Caco-2 (cell line): ENCODE measurements at regions of chr17 and their contacts with region 1.

Region 1: DNA sequence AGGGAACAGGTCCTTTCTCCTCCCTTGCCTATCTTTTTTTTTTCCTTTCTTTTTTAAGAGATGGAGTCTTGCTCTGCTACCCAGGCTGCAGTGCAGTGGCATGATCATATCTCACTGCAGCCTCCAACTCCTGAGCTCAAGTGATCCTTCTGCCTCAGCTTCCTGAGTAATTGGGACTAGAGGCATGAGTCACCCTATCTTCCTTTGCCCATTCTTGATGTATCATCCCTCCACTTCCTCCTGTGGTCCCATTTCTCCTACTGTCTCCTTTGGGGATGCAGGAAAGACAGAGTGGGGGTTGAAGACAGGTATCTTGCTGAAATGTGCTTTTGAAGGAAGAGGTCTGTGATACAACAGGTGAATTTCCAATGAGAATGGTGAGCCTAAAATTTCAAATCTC is 5.5 kb downstream of the MYO19 start:
- DNase-seq: no peak
- H3K4me3 ChIP-seq: no peak overlapping the region
- H3K4me3 Mint-ChIP-seq: no peak overlapping the region
- H3K27ac Mint-ChIP-seq: no peak overlapping the region
- H3K4me1 ChIP-seq: peaks cover 10% of the 10 kb centered on the region
- H3K4me1 Mint-ChIP-seq: peaks cover 13% of the 10 kb centered on the region
- H3K27me3 ChIP-seq: no peaks in the 10 kb centered on the region
- H3K27me3 Mint-ChIP-seq: no peaks in the 10 kb centered on the region
- CTCF ChIP-seq: no peak

Region 2: DNA sequence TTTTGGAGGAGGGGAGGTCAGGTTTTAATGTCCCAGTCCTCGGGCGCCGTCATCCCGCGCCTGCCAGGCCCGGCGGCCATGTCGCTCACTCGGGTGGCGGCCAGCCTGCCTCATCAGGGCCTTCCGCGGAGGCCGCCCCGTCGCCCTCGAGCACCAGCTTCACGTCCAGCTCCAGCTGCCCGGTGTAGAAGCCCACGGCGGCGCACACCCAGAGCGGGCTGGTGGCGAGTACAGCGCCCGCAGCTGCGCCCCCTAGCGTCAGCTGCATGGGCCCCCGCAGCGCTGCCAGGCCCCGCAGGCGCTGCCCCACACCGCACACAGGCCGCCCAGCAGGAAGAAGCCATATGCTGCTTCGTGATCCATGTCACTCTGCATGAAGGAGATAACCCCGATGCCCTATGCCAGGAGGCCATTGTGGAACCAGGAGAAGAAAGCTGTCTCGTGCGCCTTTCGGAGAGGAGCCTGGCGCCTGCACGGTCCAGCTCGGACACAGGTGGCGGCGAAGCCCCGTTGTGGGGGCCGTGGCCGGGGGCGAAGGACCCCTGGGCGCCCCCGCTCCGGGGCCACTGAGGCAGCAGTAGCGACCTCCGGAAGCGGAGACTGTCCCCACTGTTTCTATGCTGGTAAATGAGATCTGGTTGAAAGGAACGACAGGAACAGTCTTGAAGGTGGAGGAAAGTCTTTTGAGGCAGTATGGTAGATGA is 932.4 kb before region 1 on chr17:
- CTCF ChIA-PET with region 1: no interaction called
- POLR2A ChIA-PET with region 1: no interaction called
- intact Hi-C with region 1: loop called (anchors 10 kb)
- DNase-seq: no peak
- H3K4me3 ChIP-seq: no peak overlapping the region
- H3K4me3 Mint-ChIP-seq: no peak overlapping the region
- H3K27ac Mint-ChIP-seq: no peak overlapping the region
- H3K4me1 ChIP-seq: no peaks in the 10 kb centered on the region; the same call in 1 of the 2 replicates
- H3K4me1 Mint-ChIP-seq: no peaks in the 10 kb centered on the region
- H3K27me3 ChIP-seq: no peaks in the 10 kb centered on the region
- H3K27me3 Mint-ChIP-seq: no peaks in the 10 kb centered on the region
- CTCF ChIP-seq: no peak